ENCODE measurements at regions of chr13 and their contacts with region 1.

Region 1: DNA sequence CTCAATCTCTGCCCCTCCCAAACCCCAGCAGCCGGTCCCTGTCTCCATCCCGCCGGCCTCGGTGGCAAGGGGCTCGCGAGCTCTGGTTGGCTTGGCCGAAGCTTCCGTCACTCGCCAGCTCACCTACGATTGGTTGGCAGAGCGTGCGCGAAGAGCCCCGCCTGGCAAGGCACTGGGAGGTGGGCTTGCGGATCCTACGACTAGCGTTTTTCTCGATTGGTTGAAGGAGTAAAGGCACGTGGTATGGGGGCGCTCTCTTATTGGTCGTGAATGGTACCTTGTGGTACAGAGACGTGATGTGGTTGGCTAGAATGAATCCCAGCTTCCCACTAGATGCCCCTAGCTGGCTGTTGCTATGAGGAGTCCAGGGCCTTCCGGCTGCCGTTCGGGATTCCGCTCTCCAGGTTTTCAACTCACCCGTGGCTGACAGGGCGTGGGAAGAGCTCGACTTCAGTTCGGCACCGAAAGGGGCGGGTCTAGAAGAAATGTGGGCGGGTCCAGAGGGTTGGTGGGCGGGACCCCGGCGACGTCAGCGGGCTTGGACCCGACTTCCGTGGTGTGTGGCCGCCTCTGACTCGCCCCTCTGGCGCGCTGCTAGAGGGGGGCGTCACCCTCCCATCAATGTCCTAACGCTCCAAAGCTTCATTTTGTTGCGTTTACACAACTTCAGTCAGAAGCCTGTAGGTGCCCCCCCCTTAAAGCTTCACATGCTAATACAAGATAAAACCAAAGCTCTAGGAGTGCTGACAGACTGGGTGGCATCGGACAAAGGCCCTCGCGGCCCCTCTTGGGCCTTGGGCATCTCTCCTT is 847 bp upstream of the RAP2A start:
- DNase-seq: peak; percentile 97 to 99 (median 99)
- ATAC-seq: peak; percentile 85
- H3K4me3 ChIP-seq: peak overlapping the region; percentile 93
- H3K4me3 Mint-ChIP-seq: peak overlapping the region; percentile 90 to 99 (median 96)
- H3K27ac ChIP-seq: peak overlapping the region; percentile 100
- H3K27ac Mint-ChIP-seq: peak overlapping the region; percentile 98 to 100 (median 100)
- H3K4me1 ChIP-seq: peaks cover 0 to 8% of the 10 kb centered on the region in 2 donors
- H3K4me1 Mint-ChIP-seq: peaks cover 13 to 36% (median 30%) of the 10 kb centered on the region in 7 donors
- H3K27me3 ChIP-seq: no peaks in the 10 kb centered on the region
- H3K27me3 Mint-ChIP-seq: peaks cover 0 to 11% (median 7%) of the 10 kb centered on the region in 5 donors

Region 2: GRCh38 chr13:97369261-97369893 is 63.7 kb before region 1 on chr13:
- CTCF ChIA-PET with region 1: no interaction called
- POLR2A ChIA-PET with region 1: interaction called, 4 read pairs
- intact Hi-C with region 1: loop called in 1 of 2 experiments (anchors 2 kb)
- DNase-seq: peak in 3 of 9 donors; percentile 1 to 21 (median 6)
- ATAC-seq: peak; percentile 52
- H3K4me3 ChIP-seq: peak overlapping the region; percentile 51
- H3K4me3 Mint-ChIP-seq: peak overlapping the region; percentile 76 to 94 (median 86)
- H3K27ac ChIP-seq: peak overlapping the region; percentile 20
- H3K27ac Mint-ChIP-seq: peak overlapping the region; percentile 72 to 96 (median 82)
- H3K4me1 ChIP-seq: peaks cover 6 to 7% of the 10 kb centered on the region in 2 donors
- H3K4me1 Mint-ChIP-seq: peaks cover 9 to 28% (median 19%) of the 10 kb centered on the region in 7 donors
- H3K27me3 ChIP-seq: no peaks in the 10 kb centered on the region
- H3K27me3 Mint-ChIP-seq: no peaks in the 10 kb centered on the region

Region 3: GRCh38 chr13:97422118-97423054 is 10.7 kb before region 1 on chr13:
- CTCF ChIA-PET with region 1: no interaction called
- POLR2A ChIA-PET with region 1: no interaction called
- intact Hi-C with region 1: no loop called
- DNase-seq: no peak
- ATAC-seq: no peak
- H3K4me3 ChIP-seq: no peak overlapping the region
- H3K4me3 Mint-ChIP-seq: no peak overlapping the region
- H3K27ac ChIP-seq: no peak overlapping the region
- H3K27ac Mint-ChIP-seq: no peak overlapping the region
- H3K4me1 ChIP-seq: no peaks in the 10 kb centered on the region
- H3K4me1 Mint-ChIP-seq: peaks cover 0 to 2% (median 0%) of the 10 kb centered on the region in 7 donors
- H3K27me3 ChIP-seq: no peaks in the 10 kb centered on the region
- H3K27me3 Mint-ChIP-seq: peaks cover 10 to 27% (median 11%) of the 10 kb centered on the region in 5 donors

Region 4: DNA sequence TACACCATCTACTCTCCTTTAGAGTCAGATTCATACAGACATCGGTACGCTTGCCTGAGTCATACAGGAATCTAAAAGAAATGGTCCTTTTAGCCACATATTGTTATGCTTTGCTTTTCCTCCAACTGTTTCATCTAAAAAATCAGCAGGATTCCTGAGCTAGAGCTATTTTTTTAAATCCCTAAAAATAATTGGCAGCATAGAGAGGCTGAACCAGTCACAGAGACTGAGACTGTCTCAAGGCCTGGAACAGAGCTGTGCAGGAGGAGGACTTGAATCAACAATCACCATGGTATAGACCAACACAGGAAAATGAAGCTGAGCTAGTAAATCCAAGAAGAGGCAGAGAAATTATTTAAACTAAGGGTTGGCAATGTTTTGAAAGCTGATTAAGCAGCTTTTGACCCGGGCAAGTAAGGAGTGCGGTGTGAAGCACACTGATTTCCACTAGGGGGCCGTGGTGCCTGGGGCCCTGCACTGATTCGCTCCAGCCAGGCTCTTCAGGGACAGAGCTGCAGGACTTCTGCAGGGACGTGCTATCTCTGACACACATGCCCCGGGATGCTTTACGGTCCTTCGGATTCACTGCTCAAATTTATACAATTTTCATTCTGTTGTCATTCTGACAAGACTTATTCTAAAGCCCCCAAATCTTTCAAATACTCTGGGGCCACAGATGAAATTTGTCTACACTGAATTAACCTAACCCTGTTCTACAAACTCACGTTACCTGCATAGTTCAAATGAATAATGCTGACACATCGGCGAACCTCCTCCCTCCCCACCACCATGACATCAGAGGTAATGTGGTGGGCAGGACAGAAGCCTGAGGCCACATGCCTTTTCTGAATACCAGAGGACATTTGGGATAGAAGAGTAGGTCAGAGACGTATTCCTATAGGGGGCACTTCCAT is 1407.0 kb after region 1 on chr13:
- CTCF ChIA-PET with region 1: no interaction called
- POLR2A ChIA-PET with region 1: no interaction called
- intact Hi-C with region 1: no loop called
- DNase-seq: peak in 6 of 9 donors; percentile 5 to 30 (median 22)
- ATAC-seq: peak; percentile 79
- H3K4me3 ChIP-seq: no peak overlapping the region
- H3K4me3 Mint-ChIP-seq: no peak overlapping the region
- H3K27ac ChIP-seq: no peak overlapping the region
- H3K27ac Mint-ChIP-seq: no peak overlapping the region
- H3K4me1 ChIP-seq: no peaks in the 10 kb centered on the region
- H3K4me1 Mint-ChIP-seq: peaks cover 0 to 10% (median 9%) of the 10 kb centered on the region in 7 donors
- H3K27me3 ChIP-seq: no peaks in the 10 kb centered on the region
- H3K27me3 Mint-ChIP-seq: no peaks in the 10 kb centered on the region

Region 5: DNA sequence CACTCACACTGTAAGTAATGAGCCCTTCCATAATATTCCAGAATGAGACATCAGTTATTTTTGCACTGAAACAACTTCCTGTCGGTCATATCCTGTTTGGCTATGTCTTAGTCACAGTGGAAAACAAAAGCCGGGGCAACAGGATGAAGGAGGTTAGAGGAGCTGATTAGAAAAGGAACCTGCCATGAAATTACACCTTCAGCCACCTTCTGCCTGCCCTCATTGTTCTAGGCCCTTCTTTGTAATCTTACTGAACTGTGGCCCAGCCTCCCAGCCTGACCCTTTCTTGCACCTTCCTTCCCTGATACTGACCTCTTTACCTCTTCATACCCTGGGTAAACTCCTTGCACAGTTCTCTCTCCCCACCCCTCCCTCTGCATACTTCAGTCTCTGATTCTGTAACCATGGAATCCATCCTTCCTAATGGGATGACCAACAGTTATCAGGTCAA is 1477.4 kb after region 1 on chr13:
- CTCF ChIA-PET with region 1: no interaction called
- POLR2A ChIA-PET with region 1: no interaction called
- intact Hi-C with region 1: loop called in 1 of 2 experiments (anchors 10 kb)
- DNase-seq: peak in 8 of 9 donors; percentile 13 to 59 (median 50)
- ATAC-seq: peak; percentile 71
- H3K4me3 ChIP-seq: no peak overlapping the region
- H3K4me3 Mint-ChIP-seq: peak overlapping the region in 9 of 10 donors; percentile 5 to 82 (median 69)
- H3K27ac ChIP-seq: no peak overlapping the region
- H3K27ac Mint-ChIP-seq: peak overlapping the region; percentile 75 to 96 (median 90)
- H3K4me1 ChIP-seq: peaks cover 9 to 10% of the 10 kb centered on the region in 2 donors
- H3K4me1 Mint-ChIP-seq: peaks cover 12 to 53% (median 47%) of the 10 kb centered on the region in 7 donors
- H3K27me3 ChIP-seq: no peaks in the 10 kb centered on the region
- H3K27me3 Mint-ChIP-seq: no peaks in the 10 kb centered on the region

Measured in naive thymus-derived CD4-positive, alpha-beta T cell (primary cell).